ENCODE measurements at regions of chr15 and their contacts with region 1.

Region 1: GRCh38 chr15:65377104-65377975 is 462 bp downstream of the IGDCC3 start:
- DNase-seq: peak in 1 of 2 experiments; percentile 66
- H3K4me3 ChIP-seq: peak overlapping the region; percentile 91
- H3K4me3 Mint-ChIP-seq: peak overlapping the region; percentile 100
- H3K27ac Mint-ChIP-seq: peak overlapping the region; percentile 90
- H3K4me1 ChIP-seq: peaks cover 31% of the 10 kb centered on the region
- H3K4me1 Mint-ChIP-seq: peaks cover 29% of the 10 kb centered on the region
- H3K27me3 ChIP-seq: no peaks in the 10 kb centered on the region
- H3K27me3 Mint-ChIP-seq: no peaks in the 10 kb centered on the region
- CTCF ChIP-seq: peak in 1 of 2 experiments; percentile 0

Region 2: DNA sequence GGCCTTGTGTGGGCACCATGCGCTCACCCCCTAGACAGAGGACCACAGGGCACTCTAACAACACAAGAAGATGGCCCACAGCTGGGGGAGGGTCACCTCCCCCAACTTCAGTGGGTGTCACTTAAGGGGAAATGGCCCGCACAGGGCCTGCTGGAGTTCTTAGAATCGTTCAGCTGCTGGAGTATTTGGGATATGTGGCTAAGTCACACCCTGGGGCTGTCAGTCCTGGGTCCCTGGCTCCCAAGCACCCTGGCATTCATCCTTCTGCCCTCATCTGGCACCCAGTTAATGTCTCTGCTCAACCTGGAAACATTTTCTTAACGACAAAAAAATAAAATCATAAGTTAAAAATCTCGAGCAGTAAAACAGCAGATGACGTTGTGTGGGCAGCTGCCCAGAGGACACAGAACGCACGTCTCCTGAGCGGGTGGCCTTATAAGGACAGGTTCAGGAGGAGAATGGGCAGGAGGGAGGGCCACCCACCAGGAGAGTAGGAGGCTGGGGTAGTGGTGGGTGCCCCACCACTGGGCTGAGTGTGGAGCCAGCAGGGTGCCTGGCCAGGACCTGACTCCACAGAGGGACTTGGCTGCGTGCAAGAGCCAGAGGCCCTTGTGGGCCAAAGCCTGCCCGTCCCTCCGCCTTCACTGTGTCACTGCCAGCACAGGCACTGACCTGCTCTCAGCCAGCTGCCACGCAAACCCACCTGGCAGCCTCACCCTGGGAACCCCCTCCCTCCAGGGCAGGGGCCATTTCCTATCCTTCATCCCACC is 289.3 kb before region 1 on chr15:
- CTCF ChIA-PET with region 1: no interaction called
- POLR2A ChIA-PET with region 1: no interaction called
- intact Hi-C with region 1: no loop called
- DNase-seq: peak in 1 of 2 experiments; percentile 15
- H3K4me3 ChIP-seq: no peak overlapping the region
- H3K4me3 Mint-ChIP-seq: peak overlapping the region; percentile 67
- H3K27ac Mint-ChIP-seq: peak overlapping the region; percentile 90
- H3K4me1 ChIP-seq: peaks cover 75% of the 10 kb centered on the region
- H3K4me1 Mint-ChIP-seq: peaks cover 60% of the 10 kb centered on the region
- H3K27me3 ChIP-seq: no peaks in the 10 kb centered on the region
- H3K27me3 Mint-ChIP-seq: no peaks in the 10 kb centered on the region
- CTCF ChIP-seq: no peak

Region 3: GRCh38 chr15:65304389-65305144 is 72.8 kb before region 1 on chr15 and contains the start of gene RNU5B-1:
- CTCF ChIA-PET with region 1: interaction called, 3 read pairs
- POLR2A ChIA-PET with region 1: interaction called, 25 read pairs
- intact Hi-C with region 1: no loop called
- DNase-seq: peak; percentile 86 to 89
- H3K4me3 ChIP-seq: peak within 1 kb of the TSS; percentile 41
- H3K4me3 Mint-ChIP-seq: peak within 1 kb of the TSS; percentile 90
- H3K27ac Mint-ChIP-seq: peak within 1 kb of the TSS; percentile 95
- H3K4me1 ChIP-seq: peaks cover 6% of the 10 kb centered on the region; the same call in 1 of the 2 replicates
- H3K4me1 Mint-ChIP-seq: no peaks in the 10 kb centered on the region
- H3K27me3 ChIP-seq: no peaks in the 10 kb centered on the region
- H3K27me3 Mint-ChIP-seq: no peaks in the 10 kb centered on the region
- CTCF ChIP-seq: peak in 1 of 2 experiments; percentile 77
- total RNA-seq, gene RNU5B-1: not detected in 2 replicates

Region 4: GRCh38 chr15:65364838-65365628 is 12.3 kb before region 1 on chr15:
- CTCF ChIA-PET with region 1: interaction called, 3 read pairs
- POLR2A ChIA-PET with region 1: interaction called, 9 read pairs
- intact Hi-C with region 1: loop called (anchors 1 kb)
- DNase-seq: peak; percentile 63 to 76
- H3K4me3 ChIP-seq: no peak overlapping the region
- H3K4me3 Mint-ChIP-seq: peak overlapping the region; percentile 43
- H3K27ac Mint-ChIP-seq: peak overlapping the region; percentile 93
- H3K4me1 ChIP-seq: peaks cover 58% of the 10 kb centered on the region
- H3K4me1 Mint-ChIP-seq: peaks cover 54% of the 10 kb centered on the region
- H3K27me3 ChIP-seq: no peaks in the 10 kb centered on the region
- H3K27me3 Mint-ChIP-seq: no peaks in the 10 kb centered on the region
- CTCF ChIP-seq: no peak

Measured in Caco-2 (cell line).